Right ventricle myocardium superior (tissue), 1 donor: ENCODE measurements at regions of chr1 and their contacts with region 1.

Region 1: DNA sequence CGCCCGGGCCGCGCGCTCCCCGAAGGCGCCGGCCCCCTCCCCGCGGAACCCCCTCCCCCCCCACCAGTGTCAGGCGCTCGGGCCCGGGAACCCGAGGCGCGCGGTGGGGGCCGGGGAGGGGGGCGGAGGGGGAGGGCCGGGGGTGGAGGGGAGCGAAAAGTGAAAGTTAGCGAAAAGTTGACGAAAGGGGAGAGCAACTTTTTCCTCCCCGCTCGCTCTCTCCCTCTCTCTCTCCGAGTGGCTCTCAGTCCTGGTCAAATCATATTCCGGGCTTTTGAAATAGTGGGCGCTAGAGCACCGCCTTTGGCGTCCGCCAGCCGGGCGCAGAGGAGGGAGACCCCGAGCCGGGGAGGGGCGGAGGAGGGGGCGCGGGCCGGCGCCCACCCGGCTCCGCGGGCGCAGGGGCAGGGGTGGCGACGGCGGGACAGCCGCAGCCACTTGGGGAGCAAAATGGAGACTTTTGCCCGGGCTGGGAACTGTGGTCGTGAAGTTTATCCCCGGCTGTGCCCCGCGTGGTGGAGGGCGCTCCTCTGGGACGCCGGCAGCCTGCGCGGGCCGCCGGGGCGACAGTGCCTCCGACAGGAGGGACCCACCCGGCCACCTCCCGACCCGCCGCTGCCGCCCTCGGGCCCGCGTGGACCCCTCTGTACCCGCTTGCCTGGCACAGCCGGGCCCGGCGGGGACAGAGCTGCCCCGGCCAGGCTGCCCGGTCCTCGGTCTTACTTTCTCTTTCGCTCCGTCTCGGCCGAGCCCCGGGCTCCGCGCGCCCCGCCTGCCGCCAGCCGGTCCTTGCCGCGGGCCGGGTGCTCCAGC is 694 bp downstream of the PRDM16 start:
- DNase-seq: peak; percentile 60
- ATAC-seq: peak; percentile 23

Region 2: GRCh38 chr1:3198371-3199271 is 128.9 kb after region 1 on chr1:
- intact Hi-C with region 1: no loop called
- DNase-seq: no peak
- ATAC-seq: peak; percentile 49

Region 3: DNA sequence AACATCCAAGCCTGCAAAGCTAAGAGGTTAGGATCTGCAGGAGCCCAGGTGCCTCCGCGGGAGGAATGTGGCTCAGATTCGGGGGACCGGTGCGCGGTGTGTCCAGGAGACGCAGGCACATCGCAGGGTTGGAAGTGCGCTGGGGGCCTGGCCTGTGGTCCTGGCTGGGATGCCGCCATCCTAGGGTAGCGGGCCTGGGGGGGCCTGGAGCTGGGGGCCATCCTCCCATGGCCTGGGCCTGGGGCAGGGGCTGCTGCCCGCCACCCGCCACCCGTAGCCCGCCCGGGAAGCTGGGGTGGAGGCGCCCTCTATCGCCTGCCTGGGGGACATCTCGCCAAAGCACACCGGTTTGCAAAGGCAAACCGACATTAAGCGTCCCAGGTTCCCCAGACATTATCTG is 214.2 kb after region 1 on chr1:
- intact Hi-C with region 1: loop called (anchors 10 kb)
- DNase-seq: peak; percentile 68
- ATAC-seq: peak; percentile 86

Region 4: DNA sequence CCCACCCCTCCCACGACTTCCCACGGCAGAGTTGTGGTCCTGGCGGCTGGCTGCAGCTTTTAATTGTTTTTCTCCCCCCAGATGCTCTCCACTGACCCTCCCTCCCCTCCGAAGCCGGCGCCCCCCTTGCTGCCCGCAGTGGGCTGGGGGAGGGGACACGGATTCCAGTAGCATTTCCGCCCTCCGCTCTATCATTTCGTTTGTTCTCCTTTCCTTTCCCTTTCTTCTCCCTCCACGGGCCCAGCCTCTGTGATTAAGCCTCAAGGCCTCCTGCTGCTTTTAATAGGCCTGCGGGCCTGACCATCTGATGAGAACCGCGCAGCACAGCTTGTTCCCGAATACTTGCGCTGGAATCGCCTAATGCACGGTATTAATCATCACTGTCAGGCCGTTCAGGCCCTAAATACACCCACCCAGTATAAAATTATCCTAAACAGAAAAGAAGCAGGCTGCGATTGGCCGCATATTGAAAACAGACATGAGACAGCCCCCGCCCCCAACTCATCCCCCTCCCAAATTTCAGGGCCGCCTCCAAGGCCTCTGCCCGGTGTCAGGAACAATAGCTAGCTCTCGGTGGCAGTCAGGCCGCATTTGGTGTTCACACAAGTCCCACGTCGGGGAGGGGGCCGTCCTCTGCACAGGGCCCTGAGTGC is 282.7 kb after region 1 on chr1:
- intact Hi-C with region 1: loop called (anchors 5 kb)
- DNase-seq: no peak
- ATAC-seq: no peak

Region 5: GRCh38 chr1:3410142-3410925 is 340.6 kb after region 1 on chr1:
- intact Hi-C with region 1: loop called (anchors 2 kb)
- DNase-seq: peak; percentile 77
- ATAC-seq: peak; percentile 89